GM23248 (cell line): ENCODE measurements at regions of chr14 and their contacts with region 1.

Region 1: GRCh38 chr14:72516936-72517700 is 376.8 kb downstream of the DPF3 start:
- DNase-seq: peak; percentile 85
- H3K4me3 ChIP-seq: no peak overlapping the region
- H3K27ac ChIP-seq: no peak overlapping the region
- H3K4me1 ChIP-seq: peaks cover 15% of the 10 kb centered on the region
- H3K27me3 ChIP-seq: no peaks in the 10 kb centered on the region

Region 2: DNA sequence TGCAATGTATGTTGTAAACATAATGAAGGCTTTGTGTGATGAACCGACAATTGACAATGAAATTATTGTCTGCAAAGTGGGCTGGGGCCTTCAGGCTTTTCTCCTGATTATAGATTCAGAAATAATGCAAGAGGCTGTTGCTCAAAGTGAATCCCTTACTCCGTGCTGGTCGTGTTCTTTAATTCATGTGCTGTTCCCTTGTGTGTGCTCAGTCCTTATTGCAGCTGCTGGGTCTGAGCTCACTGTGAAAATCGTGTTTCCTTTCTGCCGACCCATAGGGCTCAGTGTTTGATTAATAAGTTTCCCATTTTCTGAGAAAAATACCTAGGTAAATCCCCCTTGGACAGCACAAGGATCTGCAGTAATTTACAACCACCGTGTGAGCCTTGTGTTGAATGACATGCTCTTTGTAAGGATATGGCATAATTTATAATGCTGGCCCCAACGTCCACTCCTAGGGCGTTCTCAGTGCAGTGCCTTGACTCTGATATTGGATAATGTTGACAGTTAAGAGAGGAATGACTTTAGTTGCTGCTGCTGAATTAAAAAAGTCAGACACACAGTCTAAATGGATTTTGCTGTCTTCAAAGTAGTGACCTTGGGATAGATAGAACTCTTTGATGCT is 503.3 kb before region 1 on chr14:
- in situ Hi-C with region 1: no loop called
- DNase-seq: no peak
- H3K4me3 ChIP-seq: no peak overlapping the region
- H3K27ac ChIP-seq: no peak overlapping the region
- H3K4me1 ChIP-seq: no peaks in the 10 kb centered on the region
- H3K27me3 ChIP-seq: no peaks in the 10 kb centered on the region

Region 3: DNA sequence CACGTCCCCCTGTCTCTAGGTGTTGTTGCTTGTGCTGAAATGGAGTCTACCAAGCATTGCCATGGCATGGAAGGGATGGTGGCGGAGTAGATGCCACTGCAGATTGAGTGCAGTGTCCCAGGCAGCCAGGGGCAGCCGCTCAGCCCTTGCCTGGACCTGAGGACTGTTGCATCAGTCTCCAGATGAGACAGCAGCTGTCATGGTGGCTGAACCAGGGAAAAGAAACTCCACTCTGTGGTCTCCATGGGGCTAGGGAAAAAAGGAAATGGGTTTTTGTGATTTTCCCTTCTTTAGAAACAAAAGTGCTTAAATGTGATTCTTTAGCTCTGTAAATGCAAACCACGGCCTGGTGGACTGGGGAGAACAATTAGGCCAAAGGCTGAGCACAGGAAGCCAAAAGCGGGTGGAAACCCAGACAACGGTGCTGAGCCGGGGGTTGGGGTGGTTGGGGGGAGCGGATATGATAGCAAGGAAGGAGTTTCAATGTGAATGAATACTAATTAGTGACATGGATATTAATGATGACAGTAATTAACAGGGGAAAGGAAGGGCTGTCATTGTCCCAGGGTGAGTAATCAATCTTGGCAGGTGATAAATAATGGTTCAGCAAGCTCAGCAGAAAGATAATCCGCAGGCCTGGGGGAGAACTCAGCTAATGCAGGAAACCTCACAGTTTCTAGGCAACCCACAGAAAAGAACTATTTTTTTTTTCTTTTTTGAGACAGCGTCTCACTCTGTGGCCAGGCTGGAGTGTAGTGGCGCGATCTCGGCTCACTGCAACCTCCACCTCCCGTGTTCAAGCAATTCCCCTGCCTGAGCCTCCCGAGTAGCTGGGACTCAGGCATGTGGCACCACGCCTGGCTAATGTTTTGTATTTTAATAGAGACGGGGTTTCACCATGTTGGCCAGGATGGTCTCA is 65.8 kb before region 1 on chr14:
- in situ Hi-C with region 1: no loop called
- DNase-seq: no peak
- H3K4me3 ChIP-seq: no peak overlapping the region
- H3K27ac ChIP-seq: no peak overlapping the region
- H3K4me1 ChIP-seq: no peaks in the 10 kb centered on the region; the same call in 1 of the 2 replicates
- H3K27me3 ChIP-seq: peaks cover 35% of the 10 kb centered on the region

Region 4: GRCh38 chr14:72948481-72949138 is 431.5 kb after region 1 on chr14:
- in situ Hi-C with region 1: loop called (anchors 10 kb)
- DNase-seq: peak; percentile 74
- H3K4me3 ChIP-seq: no peak overlapping the region
- H3K27ac ChIP-seq: no peak overlapping the region
- H3K4me1 ChIP-seq: no peaks in the 10 kb centered on the region
- H3K27me3 ChIP-seq: no peaks in the 10 kb centered on the region